Lower lobe of right lung (tissue), 2 donors: ENCODE measurements at regions of chr9 and their contacts with region 1.

Region 1: GRCh38 chr9:77158772-77159513 is 18.4 kb upstream of the VPS13A start:
- DNase-seq: no peak
- ATAC-seq: no peak
- H3K4me3 ChIP-seq: no peak overlapping the region
- H3K27ac ChIP-seq: no peak overlapping the region
- H3K4me1 ChIP-seq: peaks cover 5% of the 10 kb centered on the region
- H3K27me3 ChIP-seq: no peaks in the 10 kb centered on the region
- CTCF ChIP-seq: no peak

Region 2: DNA sequence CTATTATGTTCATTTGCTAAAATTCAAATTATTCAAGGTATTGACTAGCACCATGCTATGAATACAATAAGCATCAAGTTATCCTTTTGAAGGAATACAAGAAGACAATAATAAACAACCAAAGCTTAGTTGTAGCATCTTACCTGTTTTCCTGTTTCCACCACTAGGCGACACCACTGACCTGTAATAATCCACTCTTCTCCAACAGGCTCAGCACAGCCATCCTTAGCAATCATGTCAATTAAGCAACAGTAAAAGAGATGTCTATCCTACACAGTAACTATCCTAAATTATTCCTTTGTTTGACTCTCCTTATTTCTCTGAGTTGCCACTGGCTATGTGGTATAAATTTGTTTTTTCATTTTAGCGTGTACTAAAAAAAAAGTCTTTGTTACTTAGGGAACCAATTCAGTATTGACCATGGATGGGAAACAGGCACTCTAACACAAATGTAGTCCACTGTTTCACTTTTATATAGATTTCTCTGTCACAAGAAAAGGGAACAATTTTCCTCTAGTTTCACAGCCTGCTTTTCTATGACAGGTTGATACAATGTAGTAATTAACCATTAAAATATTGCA is 348.5 kb before region 1 on chr9:
- intact Hi-C with region 1: loop called (anchors 10 kb)
- DNase-seq: no peak
- ATAC-seq: peak; percentile 50 to 56
- H3K4me3 ChIP-seq: no peak overlapping the region
- H3K27ac ChIP-seq: no peak overlapping the region
- H3K4me1 ChIP-seq: no peaks in the 10 kb centered on the region
- H3K27me3 ChIP-seq: peaks cover 8% of the 10 kb centered on the region
- CTCF ChIP-seq: peak; percentile 58

Region 3: GRCh38 chr9:76996700-76997099 is 162.2 kb before region 1 on chr9:
- intact Hi-C with region 1: no loop called
- DNase-seq: no peak
- ATAC-seq: no peak
- H3K4me3 ChIP-seq: no peak overlapping the region
- H3K27ac ChIP-seq: no peak overlapping the region
- H3K4me1 ChIP-seq: no peaks in the 10 kb centered on the region
- H3K27me3 ChIP-seq: peaks cover 7% of the 10 kb centered on the region
- CTCF ChIP-seq: peak; percentile 27